T-cell (primary cell): ENCODE measurements at regions of chr17 and their contacts with region 1.

Region 1: DNA sequence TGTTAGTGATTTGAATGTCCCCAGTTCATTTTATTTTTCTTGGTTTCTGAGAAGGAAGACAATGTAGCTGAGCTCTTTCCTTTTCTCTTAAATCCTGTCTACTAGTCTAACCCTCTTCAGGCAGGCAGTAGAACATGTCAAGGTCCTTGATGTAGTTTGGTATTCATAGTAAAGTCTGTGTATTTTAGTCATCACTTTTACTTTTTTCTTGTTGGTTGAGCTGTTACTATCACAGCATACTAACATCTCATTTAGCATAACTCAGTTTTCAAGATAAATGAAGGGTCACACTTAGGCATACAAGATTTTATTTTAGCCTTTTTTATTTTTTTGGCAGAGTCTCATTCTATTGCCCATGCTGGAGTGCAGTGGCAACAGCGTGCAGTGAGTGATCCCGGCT is 70.5 kb downstream of the KPNA2 start:
- DNase-seq: no peak
- ATAC-seq: no peak
- H3K4me3 ChIP-seq: no peak overlapping the region
- H3K4me3 Mint-ChIP-seq: no peak overlapping the region
- H3K27ac ChIP-seq: no peak overlapping the region
- H3K27ac Mint-ChIP-seq: peak overlapping the region; percentile 2 to 53
- H3K4me1 ChIP-seq: peaks cover 11 to 18% of the 10 kb centered on the region in 2 experiments
- H3K4me1 Mint-ChIP-seq: peaks cover 54 to 61% (median 55%) of the 10 kb centered on the region in 3 donors
- H3K27me3 ChIP-seq: no peaks in the 10 kb centered on the region
- H3K27me3 Mint-ChIP-seq: no peaks in the 10 kb centered on the region

Region 2: DNA sequence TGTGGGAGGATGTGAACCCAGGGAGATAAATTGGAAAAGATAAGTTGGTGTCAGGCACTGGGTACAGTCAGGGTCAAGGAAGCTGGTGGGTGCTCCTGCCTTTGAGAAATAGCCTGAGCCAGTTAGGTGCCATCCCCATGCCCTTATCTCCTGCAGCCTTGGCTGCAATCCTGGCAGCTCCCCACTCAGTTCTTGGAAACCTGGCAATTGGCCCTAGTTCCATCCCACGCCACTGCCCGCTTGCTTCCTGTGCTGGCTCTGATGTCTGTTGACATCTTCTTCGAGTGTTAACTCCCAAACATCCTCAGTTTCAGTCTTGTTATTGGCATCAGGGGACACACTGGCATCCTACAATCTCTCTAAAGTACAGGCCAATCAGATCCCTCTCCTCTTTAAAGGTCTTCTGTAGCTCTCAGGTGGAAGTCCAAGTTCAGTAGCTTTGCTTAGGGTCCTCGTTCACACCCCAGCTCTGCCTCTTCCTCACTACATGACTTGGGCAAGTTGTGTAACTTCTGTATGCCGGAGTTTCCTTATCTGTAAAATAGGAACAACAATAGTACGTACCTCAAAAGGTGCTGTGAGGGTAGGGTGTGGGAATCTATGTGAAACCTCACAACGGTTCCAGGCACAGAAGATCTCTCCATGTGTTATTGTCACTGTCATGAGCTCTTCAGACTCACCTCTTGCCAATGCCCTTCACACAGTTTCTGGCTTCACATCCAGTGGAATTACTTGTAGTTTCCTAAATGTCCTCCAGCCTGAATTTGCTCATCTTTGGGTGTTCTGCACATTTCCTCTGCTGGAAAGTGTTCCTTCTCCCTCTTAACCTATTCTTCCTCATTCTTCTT is 392.6 kb after region 1 on chr17:
- CTCF ChIA-PET with region 1: interaction called in 1 of 2 experiments, 3 read pairs
- POLR2A ChIA-PET with region 1: interaction called in 1 of 2 experiments, 10 read pairs
- DNase-seq: no peak
- ATAC-seq: no peak
- H3K4me3 ChIP-seq: no peak overlapping the region
- H3K4me3 Mint-ChIP-seq: peak overlapping the region in 1 of 3 donors; percentile 1
- H3K27ac ChIP-seq: no peak overlapping the region
- H3K27ac Mint-ChIP-seq: peak overlapping the region in 1 of 2 donors; percentile 28
- H3K4me1 ChIP-seq: peaks cover 0 to 5% of the 10 kb centered on the region in 2 experiments
- H3K4me1 Mint-ChIP-seq: peaks cover 13 to 21% (median 19%) of the 10 kb centered on the region in 3 donors
- H3K27me3 ChIP-seq: peaks cover 0 to 2% of the 10 kb centered on the region in 2 experiments
- H3K27me3 Mint-ChIP-seq: peaks cover 3 to 11% of the 10 kb centered on the region in 2 donors

Region 3: DNA sequence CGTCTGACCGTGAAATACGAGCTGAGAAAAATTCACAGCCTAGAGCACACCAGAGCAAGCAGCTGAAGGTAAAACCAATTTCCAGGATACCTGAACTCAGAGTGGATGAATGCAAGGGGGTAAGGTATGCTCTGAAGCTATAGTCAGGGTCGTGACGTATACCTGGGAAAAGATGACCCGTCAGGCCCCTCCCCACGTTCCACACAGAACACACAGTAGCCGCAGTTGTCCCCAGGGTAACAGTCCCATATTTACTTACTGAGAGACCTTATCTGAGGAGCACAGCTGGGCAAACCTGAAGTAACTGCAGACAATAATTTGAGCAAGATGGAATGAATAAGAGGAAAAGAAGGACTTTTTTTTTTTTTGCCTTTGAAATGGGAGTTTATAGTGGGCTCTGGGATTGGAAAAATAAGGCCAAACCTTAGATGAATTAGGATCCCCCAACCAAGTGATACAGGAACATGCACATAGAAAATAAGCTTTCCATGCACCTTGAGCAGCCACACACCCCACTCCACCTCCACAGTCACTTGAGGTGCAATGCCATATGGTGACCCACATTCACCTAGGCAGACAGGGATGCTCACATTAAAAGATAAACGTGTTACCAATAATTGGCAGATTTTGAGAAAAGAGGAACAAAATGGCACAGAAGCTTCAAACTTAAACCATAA is 997.6 kb after region 1 on chr17:
- CTCF ChIA-PET with region 1: no interaction called
- POLR2A ChIA-PET with region 1: no interaction called
- DNase-seq: no peak
- ATAC-seq: no peak
- H3K4me3 ChIP-seq: no peak overlapping the region
- H3K4me3 Mint-ChIP-seq: no peak overlapping the region
- H3K27ac ChIP-seq: no peak overlapping the region
- H3K27ac Mint-ChIP-seq: no peak overlapping the region
- H3K4me1 ChIP-seq: no peaks in the 10 kb centered on the region
- H3K4me1 Mint-ChIP-seq: no peaks in the 10 kb centered on the region
- H3K27me3 ChIP-seq: no peaks in the 10 kb centered on the region
- H3K27me3 Mint-ChIP-seq: no peaks in the 10 kb centered on the region